Activated CD4-positive, alpha-beta T cell treated with anti-CD3 and anti-CD28 coated beads for 36 hours (primary cell): ENCODE measurements at regions of chr17 and their contacts with region 1.

Region 1: DNA sequence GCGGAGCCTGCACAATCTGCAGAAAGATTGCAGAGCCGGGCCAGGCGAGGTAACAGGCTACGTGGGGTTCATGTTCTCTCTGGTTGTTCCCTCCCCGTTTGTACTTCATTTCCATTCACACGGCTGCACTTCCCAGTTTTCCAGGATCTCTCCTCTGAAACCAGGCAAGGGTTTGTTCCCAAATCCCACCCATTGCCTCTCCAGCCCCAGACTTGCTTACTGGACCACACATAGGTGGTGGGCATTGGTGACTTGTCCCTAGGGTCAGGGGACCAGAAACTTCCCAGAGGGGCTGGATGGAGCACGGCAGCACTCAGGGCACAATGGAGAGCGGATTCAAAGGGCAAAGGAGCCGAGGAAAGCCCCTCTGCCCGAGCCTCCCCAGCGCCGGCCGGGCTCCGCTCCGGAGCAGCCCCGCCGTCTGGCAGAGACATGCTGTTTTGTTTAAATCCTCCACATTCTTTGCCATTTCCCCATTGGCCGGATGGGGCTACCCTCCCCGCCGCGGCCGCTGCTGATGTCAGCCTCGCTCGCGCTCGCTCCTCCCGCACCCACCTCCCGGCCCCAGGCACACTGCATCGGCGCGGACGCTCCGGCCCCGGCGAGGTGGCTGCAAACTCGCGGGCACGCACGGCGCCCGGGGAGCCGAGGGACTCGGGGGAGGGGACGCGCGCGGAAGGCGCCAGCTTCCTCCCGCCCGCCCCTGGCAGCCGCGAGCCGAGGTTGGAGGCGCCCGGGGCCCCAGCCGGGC is at the start of gene PITPNC1:
- DNase-seq: peak; percentile 94
- ATAC-seq: peak; percentile 74
- H3K4me3 Mint-ChIP-seq: peak within 1 kb of the TSS; percentile 83
- H3K27ac Mint-ChIP-seq: peak within 1 kb of the TSS; percentile 82
- H3K4me1 Mint-ChIP-seq: peaks cover 38% of the 10 kb centered on the region
- H3K27me3 Mint-ChIP-seq: no peaks in the 10 kb centered on the region
- total RNA-seq, gene PITPNC1: 41.6 to 56.3 TPM

Region 2: DNA sequence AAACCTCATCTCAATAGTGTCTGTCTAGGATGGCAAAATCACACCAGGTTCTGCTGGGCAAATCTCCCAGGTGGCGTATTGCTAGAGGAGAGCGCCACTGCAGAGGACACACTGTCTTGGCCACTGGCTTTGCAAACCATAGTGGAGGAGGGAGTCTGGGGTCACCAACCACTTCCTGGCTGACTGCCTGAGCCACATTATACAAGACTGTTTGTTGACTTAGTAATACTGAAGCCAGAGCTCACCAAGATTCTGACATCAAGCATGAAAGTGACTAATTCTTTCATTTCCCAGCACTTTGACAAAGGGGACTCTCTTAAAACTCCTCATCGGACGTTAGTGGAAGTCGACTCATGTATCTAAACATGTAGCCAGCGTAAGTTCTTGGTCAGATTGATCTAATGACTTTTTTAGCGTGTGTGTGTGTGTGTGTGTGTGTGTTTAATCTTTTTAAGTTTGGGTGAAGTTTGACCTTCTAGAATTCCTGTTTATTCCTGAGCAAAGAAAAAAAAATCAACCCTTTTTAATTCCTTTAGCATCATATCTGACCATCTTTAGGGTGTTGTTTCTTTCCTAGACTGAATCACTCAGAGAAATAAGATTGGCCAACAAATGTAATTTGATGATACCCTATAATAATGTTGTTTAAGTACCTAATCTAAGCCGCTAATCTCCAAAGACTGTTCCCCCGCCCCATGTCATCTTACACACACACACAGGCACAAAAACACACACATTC is 13.9 kb after region 1 on chr17:
- CTCF ChIA-PET with region 1: interaction called, 71 read pairs
- POLR2A ChIA-PET with region 1: interaction called, 9 read pairs
- intact Hi-C with region 1: loop called in 1 of 2 experiments (anchors 1 kb)
- DNase-seq: peak; percentile 86
- ATAC-seq: peak; percentile 90
- H3K4me3 Mint-ChIP-seq: peak overlapping the region; percentile 66
- H3K27ac Mint-ChIP-seq: peak overlapping the region; percentile 95
- H3K4me1 Mint-ChIP-seq: peaks cover 88% of the 10 kb centered on the region
- H3K27me3 Mint-ChIP-seq: no peaks in the 10 kb centered on the region

Region 3: GRCh38 chr17:67441052-67441927 is 64.4 kb after region 1 on chr17:
- CTCF ChIA-PET with region 1: interaction called, 31 read pairs
- POLR2A ChIA-PET with region 1: interaction called, 12 read pairs
- intact Hi-C with region 1: no loop called
- DNase-seq: peak; percentile 85
- ATAC-seq: peak; percentile 91
- H3K4me3 Mint-ChIP-seq: peak overlapping the region; percentile 76
- H3K27ac Mint-ChIP-seq: peak overlapping the region; percentile 98
- H3K4me1 Mint-ChIP-seq: peaks cover 80% of the 10 kb centered on the region
- H3K27me3 Mint-ChIP-seq: no peaks in the 10 kb centered on the region

Region 4: DNA sequence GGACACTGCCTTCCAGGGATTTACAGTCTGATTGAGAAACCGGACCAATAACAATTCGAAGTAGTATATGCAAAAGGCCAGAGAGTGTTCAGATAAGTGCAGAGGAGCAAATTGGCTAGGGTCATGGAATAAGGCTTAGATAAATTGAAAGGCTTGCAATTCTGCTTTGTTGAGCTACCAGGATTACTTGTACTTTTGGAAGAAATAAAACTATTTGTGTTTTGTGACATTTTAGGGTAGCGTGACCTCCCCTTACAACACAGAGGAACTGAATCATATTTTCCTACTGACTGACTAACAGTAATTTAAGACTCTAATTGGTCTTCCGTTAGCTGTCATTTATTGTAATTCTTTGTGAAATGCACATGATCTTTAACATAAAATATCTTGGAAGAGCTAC is 104.9 kb after region 1 on chr17:
- CTCF ChIA-PET with region 1: interaction called, 171 read pairs
- POLR2A ChIA-PET with region 1: interaction called, 4 read pairs
- intact Hi-C with region 1: no loop called
- DNase-seq: no peak
- ATAC-seq: no peak
- H3K4me3 Mint-ChIP-seq: peak overlapping the region; percentile 21
- H3K27ac Mint-ChIP-seq: peak overlapping the region; percentile 90
- H3K4me1 Mint-ChIP-seq: peaks cover 71% of the 10 kb centered on the region
- H3K27me3 Mint-ChIP-seq: no peaks in the 10 kb centered on the region

Region 5: DNA sequence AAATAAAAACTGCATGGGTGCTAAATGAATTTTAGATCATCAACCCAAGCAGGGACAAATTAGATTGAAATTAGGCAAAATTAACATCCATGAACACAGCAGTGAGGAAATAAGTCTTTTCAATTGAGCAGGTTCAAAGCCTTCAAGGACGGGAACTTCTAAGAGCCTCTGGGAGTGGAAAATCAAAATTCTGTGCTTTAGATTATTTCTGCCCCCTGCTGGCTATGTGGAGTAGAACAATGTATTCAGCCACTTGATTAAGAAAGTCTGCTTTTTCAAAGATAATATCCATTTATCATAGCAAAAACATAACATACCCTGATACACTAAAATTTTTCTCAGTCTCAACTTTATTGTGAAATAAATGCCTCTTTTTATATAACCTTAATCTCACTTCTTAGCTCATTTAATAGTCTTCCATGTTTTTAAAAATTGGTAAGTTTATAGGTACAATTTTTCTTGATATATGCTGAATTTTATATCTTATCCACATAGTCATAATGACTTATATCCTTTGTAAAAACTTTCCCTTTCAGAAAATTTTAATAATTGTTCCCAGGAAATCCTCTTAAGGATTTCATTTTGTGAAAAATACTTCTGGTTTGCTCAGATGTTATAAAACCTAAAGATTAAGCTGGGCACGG is 312.7 kb after region 1 on chr17:
- CTCF ChIA-PET with region 1: interaction called, 94 read pairs
- POLR2A ChIA-PET with region 1: no interaction called
- intact Hi-C with region 1: loop called (anchors 1 kb)
- DNase-seq: peak; percentile 58
- ATAC-seq: no peak
- H3K4me3 Mint-ChIP-seq: no peak overlapping the region
- H3K27ac Mint-ChIP-seq: no peak overlapping the region
- H3K4me1 Mint-ChIP-seq: peaks cover 3% of the 10 kb centered on the region
- H3K27me3 Mint-ChIP-seq: no peaks in the 10 kb centered on the region

Region 6: DNA sequence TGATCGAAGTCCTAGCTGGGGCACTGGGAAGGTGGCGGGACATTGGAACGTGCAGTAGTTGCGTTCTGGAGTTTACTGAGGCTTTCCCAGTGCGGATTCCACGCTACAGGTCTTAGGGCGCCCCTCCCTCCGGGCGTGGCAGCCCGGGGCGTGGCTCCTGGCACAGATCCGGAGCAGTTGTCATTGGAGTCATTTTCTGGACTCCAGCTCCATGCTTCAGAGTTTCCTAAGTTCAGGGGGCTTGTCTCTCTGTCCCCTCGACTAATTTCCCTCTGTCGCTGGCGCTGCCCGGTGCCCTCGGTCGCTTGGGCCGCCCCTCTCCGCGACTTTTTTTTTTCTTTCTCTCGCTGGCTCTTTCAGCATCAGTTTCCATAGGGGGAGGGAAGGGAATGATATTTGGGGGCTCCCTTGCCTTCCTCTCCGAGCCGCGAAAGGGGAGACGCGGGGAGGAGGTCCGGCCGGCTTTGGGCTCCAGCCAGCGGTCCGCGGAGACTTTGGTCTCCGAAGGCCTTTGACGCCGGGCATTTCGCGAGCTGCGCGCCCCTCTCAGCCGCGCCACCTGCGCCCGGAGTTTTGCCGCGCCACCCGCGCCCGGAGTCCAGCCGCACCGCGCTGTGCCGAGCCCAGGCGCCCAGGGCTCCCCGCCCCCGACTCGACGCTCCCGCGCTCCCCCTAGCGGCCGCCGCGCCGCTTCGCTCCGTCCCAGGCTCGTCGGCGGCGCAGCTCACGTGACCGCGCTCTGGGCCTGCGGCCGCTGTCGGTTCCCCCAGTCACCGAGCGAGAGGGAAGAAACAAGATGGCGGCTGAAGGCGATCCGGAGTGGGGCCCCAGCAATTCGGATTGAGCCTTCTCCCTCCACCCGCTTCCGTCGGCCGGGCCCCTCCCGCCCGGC is 448.1 kb after region 1 on chr17 and contains the start of gene BPTF:
- CTCF ChIA-PET with region 1: no interaction called
- POLR2A ChIA-PET with region 1: no interaction called
- intact Hi-C with region 1: loop called in 1 of 2 experiments (anchors 2 kb)
- DNase-seq: peak; percentile 95
- ATAC-seq: peak; percentile 88
- H3K4me3 Mint-ChIP-seq: peak within 1 kb of the TSS; percentile 99
- H3K27ac Mint-ChIP-seq: peak within 1 kb of the TSS; percentile 98
- H3K4me1 Mint-ChIP-seq: peaks cover 26% of the 10 kb centered on the region
- H3K27me3 Mint-ChIP-seq: peaks cover 5% of the 10 kb centered on the region
- total RNA-seq, gene BPTF: 77.6 to 109 TPM

Region 7: GRCh38 chr17:68035523-68036303 is 658.8 kb after region 1 on chr17 and contains the start of gene KPNA2:
- CTCF ChIA-PET with region 1: no interaction called
- POLR2A ChIA-PET with region 1: no interaction called
- intact Hi-C with region 1: loop called in 1 of 2 experiments (anchors 5 kb)
- DNase-seq: peak; percentile 93
- ATAC-seq: peak; percentile 91
- H3K4me3 Mint-ChIP-seq: peak within 1 kb of the TSS; percentile 96
- H3K27ac Mint-ChIP-seq: peak within 1 kb of the TSS; percentile 97
- H3K4me1 Mint-ChIP-seq: peaks cover 18% of the 10 kb centered on the region
- H3K27me3 Mint-ChIP-seq: no peaks in the 10 kb centered on the region
- total RNA-seq, gene KPNA2: 186 to 190 TPM